ENCODE measurements at regions of chr1 and their contacts with region 1.

Region 1: GRCh38 chr1:212608209-212608955 is at the start of gene ATF3:
- DNase-seq: peak; percentile 98
- ATAC-seq: peak; percentile 78
- H3K4me3 Mint-ChIP-seq: peak within 1 kb of the TSS; percentile 90
- H3K27ac Mint-ChIP-seq: peak within 1 kb of the TSS; percentile 96
- H3K4me1 Mint-ChIP-seq: peaks cover 50% of the 10 kb centered on the region
- H3K27me3 Mint-ChIP-seq: peaks cover 37% of the 10 kb centered on the region
- total RNA-seq, gene ATF3: 21.3 to 36.5 TPM

Region 2: DNA sequence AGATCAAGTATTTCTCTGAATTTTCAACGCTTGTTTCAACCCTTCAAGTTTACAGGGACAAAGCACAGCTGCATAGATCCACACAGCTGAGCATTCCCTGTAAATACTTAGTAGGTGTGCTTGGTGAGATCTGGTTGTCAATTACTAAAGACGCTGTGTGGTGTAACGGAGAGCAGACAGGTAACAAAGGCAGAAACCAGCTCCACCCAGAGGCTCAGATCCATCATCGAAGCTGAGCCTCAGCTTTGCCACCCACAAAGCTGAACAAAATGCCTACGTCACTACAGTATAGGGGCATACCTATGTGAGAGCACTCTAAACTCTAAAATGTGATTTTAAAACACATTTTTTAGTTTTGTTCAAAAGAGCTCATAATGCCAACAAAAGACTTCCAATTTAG is 232.4 kb before region 1 on chr1:
- CTCF ChIA-PET with region 1: no interaction called
- DNase-seq: no peak
- ATAC-seq: no peak
- H3K4me3 Mint-ChIP-seq: no peak overlapping the region
- H3K27ac Mint-ChIP-seq: no peak overlapping the region
- H3K4me1 Mint-ChIP-seq: peaks cover 8% of the 10 kb centered on the region
- H3K27me3 Mint-ChIP-seq: no peaks in the 10 kb centered on the region

Region 3: GRCh38 chr1:212566522-212567479 is 41.6 kb before region 1 on chr1:
- CTCF ChIA-PET with region 1: interaction called, 15 read pairs
- DNase-seq: peak; percentile 82
- ATAC-seq: peak; percentile 99
- H3K4me3 Mint-ChIP-seq: peak overlapping the region; percentile 83
- H3K27ac Mint-ChIP-seq: peak overlapping the region; percentile 94
- H3K4me1 Mint-ChIP-seq: peaks cover 27% of the 10 kb centered on the region
- H3K27me3 Mint-ChIP-seq: peaks cover 23% of the 10 kb centered on the region

Measured in activated CD8-positive, alpha-beta memory T cell treated with anti-CD3 and anti-CD28 coated beads, Interleukin-2, amount 10 ng/mL, durations not matched to agents 7 days and 5 days (primary cell).